Motor neuron (in vitro differentiated cells): ENCODE measurements at regions of chr18 and their contacts with region 1.

Region 1: DNA sequence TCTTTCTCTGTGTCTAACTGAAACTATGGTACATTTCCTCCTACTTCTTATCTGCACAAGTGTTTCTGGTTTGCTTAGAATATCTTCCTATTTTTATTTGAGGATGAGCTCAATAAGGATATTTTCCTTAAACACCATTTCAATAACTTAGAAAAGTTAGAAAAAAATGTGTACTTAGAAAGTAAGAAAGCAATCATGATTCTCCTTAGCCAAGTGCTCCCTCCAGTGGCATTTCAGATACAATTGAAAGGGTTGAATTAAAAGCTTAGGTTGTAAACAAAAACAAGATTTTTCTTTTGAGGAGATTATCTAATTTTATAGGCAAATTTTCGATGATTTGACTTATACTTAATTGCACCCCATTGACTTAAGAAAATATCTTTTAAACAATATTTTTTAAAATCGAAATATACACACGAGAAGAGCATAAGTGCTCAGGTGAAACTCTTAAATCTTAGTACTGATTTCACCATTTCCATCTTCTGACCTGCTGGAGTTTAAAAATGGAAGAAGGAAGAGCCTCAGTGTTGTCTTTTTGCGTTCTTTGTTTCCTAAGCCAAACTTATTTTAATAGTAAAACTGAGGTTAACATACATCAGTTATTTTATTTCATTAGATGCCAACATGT is 26.9 kb downstream of the C18orf63 start:
- ATAC-seq: peak in 1 of 8 experiments; percentile 34
- H3K4me3 ChIP-seq: no peak overlapping the region
- H3K27ac ChIP-seq: no peak overlapping the region
- H3K4me1 ChIP-seq: no peaks in the 10 kb centered on the region

Region 2: GRCh38 chr18:72700961-72701718 is 1641.4 kb before region 1 on chr18:
- in situ Hi-C with region 1: loop called in 1 of 9 experiments (anchors 25 kb)
- ATAC-seq: no peak
- H3K4me3 ChIP-seq: no peak overlapping the region
- H3K27ac ChIP-seq: no peak overlapping the region
- H3K4me1 ChIP-seq: no peaks in the 10 kb centered on the region

Region 3: GRCh38 chr18:73785271-73785670 is 557.3 kb before region 1 on chr18:
- in situ Hi-C with region 1: no loop called
- ATAC-seq: no peak
- H3K4me3 ChIP-seq: no peak overlapping the region
- H3K27ac ChIP-seq: no peak overlapping the region
- H3K4me1 ChIP-seq: no peaks in the 10 kb centered on the region